ENCODE measurements at regions of chr2 and their contacts with region 1.

Region 1: GRCh38 chr2:113977660-113978523 is 88.0 kb downstream of the ACTR3 start:
- DNase-seq: no peak
- H3K4me3 Mint-ChIP-seq: no peak overlapping the region
- H3K27ac Mint-ChIP-seq: no peak overlapping the region
- H3K4me1 Mint-ChIP-seq: peaks cover 15% of the 10 kb centered on the region
- H3K27me3 Mint-ChIP-seq: no peaks in the 10 kb centered on the region

Region 2: GRCh38 chr2:113889471-113890252 is 88.2 kb before region 1 on chr2 and contains the start of gene ACTR3:
- CTCF ChIA-PET with region 1: interaction called, 12 read pairs
- DNase-seq: peak; percentile 99
- H3K4me3 Mint-ChIP-seq: peak within 1 kb of the TSS; percentile 94
- H3K27ac Mint-ChIP-seq: peak within 1 kb of the TSS; percentile 98
- H3K4me1 Mint-ChIP-seq: peaks cover 75% of the 10 kb centered on the region
- H3K27me3 Mint-ChIP-seq: no peaks in the 10 kb centered on the region

Region 3: DNA sequence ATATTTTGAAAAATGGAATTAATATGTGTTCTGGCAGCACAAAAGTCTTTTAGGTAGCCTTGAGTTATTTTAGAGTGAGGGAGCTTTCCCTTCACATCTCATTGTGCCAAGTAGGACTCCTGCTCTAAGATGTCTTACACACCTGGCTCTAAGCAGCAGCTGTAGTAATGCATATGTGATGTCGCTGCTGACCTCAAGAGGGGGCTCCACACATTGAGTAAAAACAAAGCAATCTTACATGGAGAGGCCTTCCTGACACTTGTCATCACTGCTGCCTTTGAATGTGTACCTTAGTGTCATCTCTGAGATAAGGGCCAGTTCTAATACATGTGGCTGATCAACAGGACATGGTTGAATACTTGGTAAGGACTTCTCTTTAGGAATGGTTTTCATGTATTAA is 12.2 kb before region 1 on chr2:
- CTCF ChIA-PET with region 1: interaction called, 21 read pairs
- DNase-seq: no peak
- H3K4me3 Mint-ChIP-seq: no peak overlapping the region
- H3K27ac Mint-ChIP-seq: peak overlapping the region; percentile 7
- H3K4me1 Mint-ChIP-seq: peaks cover 2% of the 10 kb centered on the region
- H3K27me3 Mint-ChIP-seq: no peaks in the 10 kb centered on the region